Right cardiac atrium (tissue), 5 donors: ENCODE measurements at regions of chr12 and their contacts with region 1.

Region 1: GRCh38 chr12:29545102-29545467 is 47.6 kb upstream of the OVCH1 start:
- DNase-seq: no peak
- ATAC-seq: no peak
- H3K4me3 ChIP-seq: no peak overlapping the region
- H3K27ac ChIP-seq: no peak overlapping the region
- H3K4me1 ChIP-seq: no peaks in the 10 kb centered on the region
- H3K27me3 ChIP-seq: no peaks in the 10 kb centered on the region

Region 2: DNA sequence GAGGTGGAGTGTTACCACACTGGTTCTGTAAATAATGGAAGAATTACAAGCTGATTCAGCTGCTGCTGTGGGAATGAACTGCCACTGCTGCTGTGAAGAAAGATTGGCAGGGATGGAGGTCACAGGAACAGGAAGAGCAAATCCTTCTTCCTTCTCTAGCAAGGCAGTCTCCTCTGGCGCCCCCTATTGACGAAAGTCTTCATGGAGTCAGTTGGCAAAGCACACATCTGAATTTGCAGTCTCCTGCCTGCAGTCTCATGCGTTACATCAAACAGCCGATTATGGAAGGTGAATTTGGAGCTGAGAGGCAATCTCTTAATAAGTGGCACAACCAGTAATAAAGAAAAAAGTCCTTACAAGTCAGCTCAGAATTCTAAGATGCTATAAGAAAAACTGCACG is 344.7 kb after region 1 on chr12:
- intact Hi-C with region 1: loop called in 1 of 4 experiments (anchors 10 kb)
- DNase-seq: peak; percentile 57 to 59 (median 59)
- ATAC-seq: peak in 1 of 2 donors; percentile 29
- H3K4me3 ChIP-seq: no peak overlapping the region
- H3K27ac ChIP-seq: no peak overlapping the region
- H3K4me1 ChIP-seq: no peaks in the 10 kb centered on the region
- H3K27me3 ChIP-seq: no peaks in the 10 kb centered on the region